Dorsolateral prefrontal cortex (tissue), 120 donors: ENCODE measurements at regions of chr19 and their contacts with region 1.

Region 1: DNA sequence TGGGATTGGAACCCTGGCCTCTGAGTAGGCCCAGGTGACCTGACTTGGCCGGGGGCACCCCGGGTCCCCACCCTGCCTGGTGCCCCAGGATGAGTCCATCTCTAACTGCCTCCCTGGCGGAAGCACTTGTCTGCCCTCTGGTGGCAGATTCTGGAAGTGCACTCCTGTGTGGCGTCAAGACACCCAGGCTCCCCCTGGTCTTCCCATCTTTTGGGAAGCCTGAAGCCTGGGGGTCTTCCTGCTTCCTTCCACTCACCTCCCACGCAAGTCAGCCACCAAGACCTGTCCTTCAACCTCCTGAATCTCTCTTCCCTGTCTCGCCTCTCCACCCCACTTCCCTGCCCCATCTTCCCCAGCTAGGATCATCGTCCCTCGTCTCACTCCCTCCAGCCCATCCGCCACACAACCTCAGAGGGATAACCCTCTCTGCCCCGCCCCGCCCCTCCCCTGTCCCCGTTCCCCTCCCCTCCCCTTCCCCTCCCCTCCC is 7.4 kb downstream of the RABAC1 start:
- DNase-seq: peak; percentile 63 to 83 (median 74)
- H3K4me3 ChIP-seq: no peak overlapping the region
- H3K27ac ChIP-seq: no peak overlapping the region
- H3K27me3 ChIP-seq: peaks cover 0 to 2% (median 0%) of the 10 kb centered on the region in 45 donors
- CTCF ChIP-seq: peak; percentile 90 to 100 (median 97)

Region 2: GRCh38 chr19:41626877-41627276 is 324.9 kb before region 1 on chr19 and contains the start of gene CEACAM4:
- intact Hi-C with region 1: no loop called
- DNase-seq: no peak
- H3K4me3 ChIP-seq: peak within 1 kb of the TSS in 11 of 59 donors; percentile 13 to 38 (median 26)
- H3K27ac ChIP-seq: no peak within 1 kb of the TSS
- H3K27me3 ChIP-seq: peaks cover 0 to 34% (median 11%) of the 10 kb centered on the region in 45 donors
- CTCF ChIP-seq: no peak
- total RNA-seq, gene CEACAM4: 0.45 to 2.7 (median 0.68) TPM in 26 of 120 experiments, not detected in the others

Region 3: DNA sequence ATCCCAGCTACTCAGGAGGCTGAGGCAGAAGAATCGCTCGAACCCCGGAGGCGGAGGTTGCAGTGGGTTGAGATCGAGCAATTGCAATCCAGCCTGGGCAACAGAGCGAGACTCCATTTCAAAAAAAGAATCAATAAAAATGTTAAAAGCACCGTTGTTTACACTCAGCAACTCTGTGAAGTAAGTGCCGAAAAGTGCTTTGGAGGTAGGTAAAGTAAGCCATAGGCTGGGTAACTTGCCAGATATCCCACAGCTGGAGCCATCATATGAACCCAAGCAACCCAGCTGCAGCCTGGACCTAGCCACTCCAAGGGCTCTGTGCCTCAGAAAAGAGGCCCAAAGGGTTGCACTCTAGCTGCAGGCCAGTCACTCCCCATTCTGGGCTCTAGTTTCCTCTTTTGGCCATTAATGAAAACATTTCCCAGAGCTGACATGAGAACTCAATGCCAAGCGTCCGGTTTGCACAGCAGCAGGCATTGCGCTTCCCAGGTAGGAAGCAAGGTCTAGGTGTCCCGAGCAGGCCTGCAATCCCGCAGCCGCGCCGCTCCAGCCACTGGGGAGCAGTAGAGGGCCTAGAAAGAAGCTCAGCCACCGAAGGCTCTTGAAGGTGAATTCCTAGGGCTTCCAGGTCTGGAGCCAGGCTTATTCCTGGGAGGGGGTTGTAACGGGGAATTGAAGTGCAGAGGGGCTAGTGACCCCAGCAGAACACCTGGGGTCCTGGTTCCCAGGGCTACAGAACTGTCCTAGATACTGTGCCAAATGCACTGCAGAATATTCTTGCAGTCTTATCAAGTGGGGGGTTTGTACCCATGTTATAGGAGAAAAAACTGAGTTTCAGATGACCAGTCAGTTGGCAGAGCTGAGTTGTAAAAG is 78.7 kb before region 1 on chr19:
- intact Hi-C with region 1: loop called in 1 of 2 experiments (anchors 2 kb)
- DNase-seq: peak in 9 of 10 donors; percentile 34 to 73 (median 66)
- H3K4me3 ChIP-seq: no peak overlapping the region
- H3K27ac ChIP-seq: peak overlapping the region in 8 of 59 donors; percentile 9 to 53 (median 22)
- H3K27me3 ChIP-seq: no peaks in the 10 kb centered on the region
- CTCF ChIP-seq: peak in 54 of 56 donors; percentile 8 to 75 (median 61)